HepG2 (cell line): ENCODE measurements at regions of chr1 and their contacts with region 1.

Region 1: DNA sequence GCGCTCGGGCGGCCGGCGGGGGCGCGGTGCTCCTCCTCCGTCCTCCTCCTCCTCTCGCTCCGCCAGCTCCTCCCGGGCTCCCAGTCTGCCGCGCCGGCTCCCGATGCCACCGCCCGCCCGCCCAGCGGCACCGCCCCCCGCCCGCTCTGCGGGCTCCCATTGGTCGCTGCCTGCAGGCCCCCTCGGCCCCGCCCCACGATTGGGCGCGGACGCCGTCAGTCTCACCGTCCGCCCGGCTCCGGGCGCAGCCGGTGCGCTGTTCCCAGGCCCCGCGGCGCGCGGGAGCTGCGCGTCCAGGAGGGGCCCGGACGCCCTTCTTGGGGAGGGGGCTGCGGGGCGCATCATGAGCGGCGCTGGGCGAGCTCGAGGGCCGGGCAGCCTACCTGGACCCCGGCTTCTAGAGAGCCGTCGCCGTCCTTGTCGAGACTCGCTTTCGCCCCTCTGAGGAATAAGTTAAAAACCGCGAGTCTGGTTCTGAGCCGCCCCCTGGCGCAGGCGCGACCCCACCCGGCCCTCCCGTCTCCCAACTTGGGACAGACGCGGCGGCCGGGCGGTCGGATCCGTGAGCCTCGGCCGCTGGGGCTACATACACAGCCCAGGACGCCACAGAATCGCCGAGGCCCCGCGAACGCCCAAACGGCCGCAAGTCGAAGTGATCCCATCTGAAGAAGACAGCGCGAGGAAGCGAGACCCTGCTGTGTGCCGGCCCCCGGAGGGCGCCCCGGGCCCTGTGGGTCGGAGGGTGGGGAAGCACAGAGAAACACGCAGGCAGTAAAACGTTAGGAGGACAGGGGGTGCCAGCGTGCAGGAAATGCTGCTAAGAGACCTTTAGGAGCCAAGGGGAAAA is at the start of gene SIPA1L2:
- DNase-seq: peak; percentile 52
- ATAC-seq: peak; percentile 99
- H3K4me3 ChIP-seq: peak within 1 kb of the TSS; percentile 52 to 63 (median 56); a peak in 4 of 6 replicates
- H3K27ac ChIP-seq: no peak within 1 kb of the TSS
- H3K4me1 ChIP-seq: no peaks in the 10 kb centered on the region
- H3K27me3 ChIP-seq: peaks cover 5 to 48% of the 10 kb centered on the region in 2 experiments; a peak in 4 of 5 replicates
- CTCF ChIP-seq: peak; percentile 57
- EP300 ChIP-seq: no peak
- POLR2A ChIP-seq: no peak
- RAD21 ChIP-seq: no peak
- total RNA-seq, gene SIPA1L2: 0.03 TPM in 1 of 2 replicates, not detected in the other

Region 2: DNA sequence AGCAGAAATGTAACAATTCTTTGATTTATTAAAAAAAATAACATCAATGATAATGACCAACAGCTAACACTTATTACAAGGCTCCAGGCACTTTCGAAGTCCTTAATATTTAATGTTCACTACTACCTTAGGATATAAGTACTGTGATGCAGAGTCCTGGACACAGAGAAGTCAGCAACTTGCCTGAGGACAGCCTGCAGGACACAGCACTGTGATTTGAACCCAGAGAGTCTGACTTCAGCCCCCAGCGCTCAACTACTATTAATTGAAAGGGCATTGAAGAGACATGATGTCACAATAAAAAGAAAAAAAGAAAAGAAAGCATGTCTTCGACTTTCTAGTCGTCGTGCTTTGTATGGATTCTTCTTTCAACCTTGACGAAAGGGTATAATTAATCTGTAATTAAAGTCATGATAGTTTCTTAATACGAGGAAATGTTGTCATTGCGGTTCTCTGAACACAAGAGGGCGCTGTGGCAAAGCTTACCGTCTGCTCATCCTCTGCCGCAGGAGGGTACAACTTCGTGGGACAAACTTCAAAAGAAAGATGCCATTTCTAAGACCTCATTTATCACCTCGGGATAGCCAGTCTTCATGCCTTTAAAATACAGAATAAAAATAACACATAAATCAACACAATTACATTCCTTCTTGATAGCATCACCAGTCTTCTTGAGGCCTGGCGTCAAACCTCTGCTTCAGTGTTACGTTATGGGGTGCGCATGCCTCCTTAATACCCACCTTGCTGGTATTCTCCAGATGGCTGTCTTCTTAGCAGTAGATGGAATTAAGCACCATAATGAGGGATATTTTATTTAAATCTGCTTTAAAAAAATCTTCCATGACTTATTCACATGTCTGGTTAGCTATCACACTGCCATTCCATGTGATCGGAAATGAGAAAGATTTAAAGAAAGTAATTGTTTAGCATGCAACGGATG is 763.6 kb before region 1 on chr1:
- CTCF ChIA-PET with region 1: no interaction called
- POLR2A ChIA-PET with region 1: no interaction called
- in situ Hi-C with region 1: no loop called
- intact Hi-C with region 1: loop called (anchors 10 kb)
- DNase-seq: peak; percentile 36
- ATAC-seq: peak; percentile 38; the same call in 1 of the 3 replicates
- H3K4me3 ChIP-seq: no peak overlapping the region
- H3K27ac ChIP-seq: no peak overlapping the region
- H3K4me1 ChIP-seq: no peaks in the 10 kb centered on the region
- H3K27me3 ChIP-seq: no peaks in the 10 kb centered on the region; a peak in 1 of 5 replicates
- CTCF ChIP-seq: peak; percentile 81
- EP300 ChIP-seq: no peak
- POLR2A ChIP-seq: no peak
- RAD21 ChIP-seq: peak; percentile 67; the same call in 1 of the 2 replicates

Region 3: DNA sequence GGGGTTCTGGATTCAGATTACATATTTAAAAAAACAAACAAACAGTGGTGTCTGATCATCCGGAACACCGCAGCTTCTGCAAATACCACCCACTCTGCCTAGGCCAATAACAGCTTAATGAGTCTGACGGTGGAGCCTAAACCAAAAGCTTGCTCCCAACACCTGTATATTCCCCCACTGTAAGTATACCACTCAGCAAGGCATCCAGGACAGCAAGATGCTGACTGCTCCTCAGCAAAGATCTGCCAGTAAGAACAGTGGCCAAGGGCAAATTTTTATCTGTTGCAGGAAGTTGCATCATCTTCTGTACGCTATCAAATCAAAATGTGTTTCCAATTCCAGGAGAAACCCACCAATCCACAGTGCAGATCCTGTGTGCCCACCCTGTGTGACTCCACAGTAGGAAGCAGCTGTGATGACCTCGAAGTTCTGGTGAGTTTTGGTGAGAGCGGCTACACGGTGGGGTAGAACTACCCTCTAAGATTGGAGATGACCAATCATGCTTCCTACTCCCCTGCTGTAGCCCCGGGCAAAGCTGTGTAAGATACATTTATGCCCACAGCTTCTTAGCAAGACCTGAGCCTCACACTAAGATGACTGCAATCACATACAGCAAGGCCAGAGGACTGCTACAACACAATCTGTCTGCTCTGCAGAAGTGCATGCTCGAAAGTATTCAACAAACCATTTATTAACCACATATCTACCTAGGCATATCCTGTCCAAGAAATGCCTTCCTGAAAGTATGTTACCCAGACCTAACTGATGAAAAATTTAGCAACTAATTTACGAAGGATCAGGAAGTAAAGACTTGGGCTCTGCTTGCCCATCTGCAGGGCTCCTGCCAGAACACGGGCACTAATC is 30.9 kb before region 1 on chr1:
- CTCF ChIA-PET with region 1: no interaction called
- POLR2A ChIA-PET with region 1: no interaction called
- in situ Hi-C with region 1: no loop called
- intact Hi-C with region 1: no loop called
- DNase-seq: no peak
- ATAC-seq: no peak
- H3K4me3 ChIP-seq: no peak overlapping the region
- H3K27ac ChIP-seq: no peak overlapping the region
- H3K4me1 ChIP-seq: no peaks in the 10 kb centered on the region
- H3K27me3 ChIP-seq: peaks cover 0 to 8% of the 10 kb centered on the region in 2 experiments; a peak in 2 of 5 replicates
- CTCF ChIP-seq: no peak
- EP300 ChIP-seq: no peak
- POLR2A ChIP-seq: no peak
- RAD21 ChIP-seq: no peak

Region 4: DNA sequence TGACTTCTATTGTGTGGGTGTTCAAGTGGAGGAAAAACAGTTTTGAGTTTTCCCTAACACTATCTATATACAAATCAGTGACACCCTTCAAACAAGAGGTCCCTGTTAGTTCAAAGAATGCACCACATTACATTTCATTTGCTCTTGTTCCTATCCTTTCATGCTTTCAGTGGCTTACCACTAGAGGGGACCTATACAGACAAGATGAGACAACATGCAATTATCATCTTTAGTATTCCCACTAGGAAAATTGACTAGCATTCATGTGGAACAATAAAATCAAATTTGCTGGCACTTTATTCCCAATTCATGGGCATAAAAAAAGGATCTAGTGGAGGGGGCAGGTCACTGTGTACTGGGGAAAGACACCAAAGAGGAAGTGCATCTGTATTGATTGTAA is 13.0 kb after region 1 on chr1:
- CTCF ChIA-PET with region 1: no interaction called
- POLR2A ChIA-PET with region 1: no interaction called
- in situ Hi-C with region 1: no loop called
- intact Hi-C with region 1: loop called (anchors 1 kb)
- DNase-seq: no peak
- ATAC-seq: no peak
- H3K4me3 ChIP-seq: no peak overlapping the region
- H3K27ac ChIP-seq: no peak overlapping the region
- H3K4me1 ChIP-seq: no peaks in the 10 kb centered on the region
- H3K27me3 ChIP-seq: no peaks in the 10 kb centered on the region; a peak in 1 of 5 replicates
- CTCF ChIP-seq: no peak
- EP300 ChIP-seq: no peak
- POLR2A ChIP-seq: no peak
- RAD21 ChIP-seq: no peak

Region 5: DNA sequence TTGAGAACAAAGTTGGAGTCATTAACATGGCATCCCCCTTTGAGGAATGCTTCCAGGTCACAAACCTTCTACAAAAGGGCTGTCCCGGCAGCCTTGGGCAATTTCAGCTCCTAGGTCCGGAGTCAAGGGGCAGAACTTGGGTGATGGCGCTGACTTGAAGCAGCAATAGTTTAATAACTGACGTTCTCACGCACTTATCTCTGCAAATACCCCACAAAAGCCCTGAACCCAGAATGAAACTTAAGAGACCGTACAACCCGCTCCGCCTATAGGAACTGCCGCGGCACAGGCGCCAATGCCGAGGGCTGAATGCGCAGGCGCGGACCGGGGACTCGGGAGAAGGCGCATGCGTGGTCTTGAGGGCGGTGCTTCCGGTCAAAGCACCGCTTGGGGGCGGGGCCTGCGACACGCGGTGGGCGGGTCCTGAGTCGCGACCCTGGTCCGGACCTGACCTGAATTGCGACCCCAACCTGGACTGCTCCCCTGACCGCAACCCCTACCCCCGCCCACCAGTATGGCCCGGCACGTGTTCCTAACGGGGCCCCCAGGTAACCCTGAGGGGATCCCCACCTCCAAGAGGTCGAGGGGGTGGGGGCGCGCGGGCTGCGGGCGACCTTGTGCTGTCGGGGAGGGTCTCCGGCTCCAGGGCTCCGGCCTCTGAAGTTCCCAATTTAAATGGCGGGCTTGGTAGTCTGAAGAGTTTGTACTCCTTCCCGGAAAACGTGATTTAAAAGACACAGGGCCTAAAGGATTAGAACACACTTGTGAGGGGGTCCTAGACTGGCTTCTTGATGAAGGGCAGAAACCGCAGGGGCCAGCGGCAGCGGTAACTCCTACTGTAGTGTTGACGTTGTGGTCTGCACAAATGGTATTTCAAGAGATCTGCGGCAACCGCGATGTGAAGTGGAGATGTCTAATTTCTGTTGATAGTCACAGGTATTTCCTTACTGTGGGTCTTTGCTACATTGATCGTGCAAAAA is 320.2 kb after region 1 on chr1 and contains the start of gene NTPCR:
- CTCF ChIA-PET with region 1: no interaction called
- POLR2A ChIA-PET with region 1: no interaction called
- in situ Hi-C with region 1: no loop called
- intact Hi-C with region 1: loop called (anchors 10 kb)
- DNase-seq: peak; percentile 84
- ATAC-seq: peak; percentile 83
- H3K4me3 ChIP-seq: peak within 1 kb of the TSS; percentile 78 to 94 (median 87)
- H3K27ac ChIP-seq: peak within 1 kb of the TSS; percentile 55
- H3K4me1 ChIP-seq: peaks cover 31% of the 10 kb centered on the region
- H3K27me3 ChIP-seq: peaks cover 0 to 5% of the 10 kb centered on the region in 2 experiments; a peak in 2 of 5 replicates
- CTCF ChIP-seq: no peak
- EP300 ChIP-seq: no peak
- POLR2A ChIP-seq: peak; percentile 47 to 75; a peak in 2 of 4 replicates
- RAD21 ChIP-seq: no peak
- total RNA-seq, gene NTPCR: 47.0 and 65.1 TPM in 2 replicates

Region 6: DNA sequence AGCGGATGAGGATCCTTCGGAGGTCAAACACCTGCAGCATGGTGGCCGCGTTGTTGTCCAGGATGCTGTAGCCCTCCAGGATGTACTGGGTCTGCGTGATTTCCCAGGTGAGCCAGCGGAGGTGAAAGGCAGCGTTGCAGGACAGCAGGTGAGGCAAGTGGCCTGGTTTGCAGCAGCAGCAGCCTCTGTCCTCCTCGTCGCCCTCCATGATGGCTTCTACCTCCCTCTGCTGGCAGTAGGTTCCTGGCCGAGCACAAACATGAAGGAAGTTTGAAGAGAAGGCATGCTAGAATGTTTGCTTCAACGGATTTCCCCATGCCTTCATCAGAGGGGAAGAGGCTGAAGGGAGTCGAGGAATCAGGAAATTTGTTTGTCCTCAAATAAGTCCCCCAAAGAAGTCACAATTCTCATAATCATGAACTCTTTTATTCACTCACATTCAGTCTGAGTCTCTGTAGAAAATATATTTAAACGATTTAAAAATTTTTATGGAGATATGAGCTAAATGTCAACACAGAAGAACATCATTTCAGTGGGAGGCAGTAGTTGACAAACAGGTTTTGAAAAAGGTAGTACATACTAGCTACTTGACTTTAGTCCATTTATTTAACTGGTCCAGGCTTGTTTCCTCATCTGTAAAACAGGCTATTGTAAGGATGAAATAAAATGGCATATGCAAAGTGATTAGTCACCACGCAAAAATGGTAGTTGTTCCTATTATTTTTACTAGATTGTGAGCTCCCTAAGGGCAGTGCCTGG is 395.1 kb after region 1 on chr1:
- CTCF ChIA-PET with region 1: interaction called, 11 read pairs
- POLR2A ChIA-PET with region 1: no interaction called
- in situ Hi-C with region 1: loop called (anchors 5 kb)
- intact Hi-C with region 1: loop called (anchors 1 kb)
- DNase-seq: peak; percentile 18
- ATAC-seq: peak; percentile 84
- H3K4me3 ChIP-seq: no peak overlapping the region
- H3K27ac ChIP-seq: no peak overlapping the region
- H3K4me1 ChIP-seq: no peaks in the 10 kb centered on the region
- H3K27me3 ChIP-seq: peaks cover 5 to 19% of the 10 kb centered on the region in 2 experiments
- CTCF ChIP-seq: peak; percentile 74
- EP300 ChIP-seq: no peak
- POLR2A ChIP-seq: no peak
- RAD21 ChIP-seq: peak; percentile 50